Astrocyte of the cerebellum (primary cell): ENCODE measurements at regions of chr9 and their contacts with region 1.

Region 1: DNA sequence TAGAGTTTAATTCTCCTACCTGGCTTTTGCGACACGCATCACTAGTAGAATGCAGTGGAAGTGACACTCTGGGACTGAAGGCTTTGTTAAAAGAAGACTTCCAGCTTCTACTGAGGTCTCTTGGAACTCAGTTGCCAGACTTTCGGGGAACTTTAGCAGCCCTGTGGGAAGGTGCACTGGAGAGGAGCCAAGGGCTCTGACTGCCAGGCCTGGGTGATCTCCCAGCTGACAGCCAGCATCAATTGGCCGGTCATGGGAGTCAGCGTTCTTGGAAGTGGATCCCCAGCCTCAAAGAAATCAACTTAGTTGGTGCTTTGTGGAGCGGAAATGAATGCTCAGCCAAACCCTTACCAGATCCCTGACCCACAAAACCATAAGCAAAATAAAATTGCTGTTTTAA is 87.1 kb downstream of the OSTF1 start:
- DNase-seq: no peak
- H3K4me3 ChIP-seq: no peak overlapping the region
- CTCF ChIP-seq: no peak

Region 2: DNA sequence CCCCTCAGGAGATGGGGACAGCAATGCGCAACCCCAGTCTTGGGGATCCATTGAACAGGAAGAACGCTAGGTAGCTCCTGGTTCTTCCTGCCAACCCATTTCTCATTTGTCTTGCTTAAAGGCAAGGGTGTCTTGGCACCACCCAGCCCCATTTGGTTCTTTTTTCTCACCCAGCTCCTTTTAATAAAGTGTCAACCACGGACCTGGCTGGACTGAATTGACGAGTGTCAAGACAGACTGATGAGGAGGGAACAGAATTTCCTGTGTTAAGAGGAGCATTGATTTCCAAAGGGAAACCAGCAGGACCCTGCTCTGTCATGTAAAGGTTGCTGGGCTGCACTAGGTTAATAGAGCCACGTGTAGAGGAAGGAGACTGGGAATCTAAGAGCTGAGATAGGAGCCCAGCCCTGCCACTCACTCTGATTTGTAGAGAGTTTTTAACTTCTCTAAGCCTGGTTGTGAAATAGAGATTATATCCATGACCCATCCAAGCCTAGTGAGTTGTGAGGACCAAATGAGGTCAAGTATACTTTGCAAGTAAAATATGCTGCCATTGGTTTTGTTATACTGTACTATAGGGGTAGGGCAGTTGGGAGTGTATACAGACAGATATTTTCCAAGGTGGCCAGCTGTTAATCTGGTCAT is 53.4 kb before region 1 on chr9:
- in situ Hi-C with region 1: no loop called
- DNase-seq: no peak
- H3K4me3 ChIP-seq: no peak overlapping the region
- CTCF ChIP-seq: no peak

Region 3: GRCh38 chr9:75138260-75139040 is 36.9 kb before region 1 on chr9:
- in situ Hi-C with region 1: loop called (anchors 5 kb)
- DNase-seq: no peak
- H3K4me3 ChIP-seq: no peak overlapping the region
- CTCF ChIP-seq: no peak